Dorsolateral prefrontal cortex (tissue), 120 donors: ENCODE measurements at regions of chr19 and their contacts with region 1.

Region 1: DNA sequence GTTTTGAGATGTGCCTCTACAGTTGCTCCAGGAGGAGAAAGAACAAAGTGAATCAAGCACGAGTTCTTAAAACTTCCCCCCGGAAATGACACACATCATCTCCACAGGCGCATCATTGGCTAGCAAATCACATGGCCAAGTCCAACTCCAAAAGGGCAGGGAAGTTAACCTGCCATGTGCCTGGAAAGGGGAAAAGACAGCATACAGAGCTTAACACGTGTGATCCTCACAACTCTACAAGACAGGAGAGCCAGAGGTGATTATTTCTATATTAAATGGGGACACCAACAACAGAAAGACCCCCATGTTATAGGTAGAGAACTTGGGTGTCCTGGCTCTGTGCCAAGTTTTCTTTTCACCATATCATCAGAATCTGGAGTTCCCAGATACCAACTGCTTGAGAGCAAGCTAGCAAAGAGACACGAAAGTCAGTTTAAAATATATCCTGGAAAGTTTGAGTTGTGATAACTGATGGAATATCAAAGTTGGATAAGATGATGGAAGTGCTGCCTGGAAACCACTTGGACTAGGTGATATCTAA is 871.1 kb downstream of the UQCRFS1 start:
- DNase-seq: no peak
- H3K4me3 ChIP-seq: no peak overlapping the region
- H3K27ac ChIP-seq: no peak overlapping the region
- H3K27me3 ChIP-seq: peaks cover 0 to 22% (median 3%) of the 10 kb centered on the region in 45 donors
- CTCF ChIP-seq: no peak

Region 2: DNA sequence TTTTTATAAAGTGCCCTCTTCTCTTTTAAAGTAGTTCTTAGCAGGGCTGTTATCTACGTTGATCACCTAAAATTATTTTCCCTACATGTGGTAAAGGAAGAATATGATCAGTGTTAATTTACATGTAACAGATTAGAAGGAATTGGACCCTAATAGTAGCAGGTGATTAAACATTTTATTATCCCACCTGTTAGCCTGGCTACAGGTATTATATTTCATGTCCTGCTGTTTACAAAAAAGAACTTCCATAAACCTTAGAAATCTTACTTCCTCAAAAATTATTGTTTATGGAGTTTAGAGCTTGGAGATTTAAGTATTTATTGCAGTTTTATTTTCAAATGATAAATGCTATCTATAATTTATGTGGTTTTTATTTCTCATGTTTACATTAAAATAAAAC is 355.6 kb before region 1 on chr19:
- intact Hi-C with region 1: loop called in 1 of 2 experiments (anchors 5 kb)
- DNase-seq: no peak
- H3K4me3 ChIP-seq: no peak overlapping the region
- H3K27ac ChIP-seq: no peak overlapping the region
- H3K27me3 ChIP-seq: peaks cover 0 to 6% (median 0%) of the 10 kb centered on the region in 45 donors
- CTCF ChIP-seq: no peak

Region 3: GRCh38 chr19:28313633-28314032 is 28.2 kb before region 1 on chr19:
- intact Hi-C with region 1: loop called in 1 of 2 experiments (anchors 2 kb)
- DNase-seq: no peak
- H3K4me3 ChIP-seq: no peak overlapping the region
- H3K27ac ChIP-seq: no peak overlapping the region
- H3K27me3 ChIP-seq: peaks cover 0 to 4% (median 0%) of the 10 kb centered on the region in 45 donors
- CTCF ChIP-seq: no peak